ENCODE measurements at regions of chr6 and their contacts with region 1.

Region 1: GRCh38 chr6:111347589-111347988 is 135.4 kb downstream of the REV3L start:
- DNase-seq: no peak
- ATAC-seq: no peak
- H3K4me3 ChIP-seq: no peak overlapping the region
- H3K27ac ChIP-seq: no peak overlapping the region
- H3K4me1 ChIP-seq: no peaks in the 10 kb centered on the region
- H3K27me3 ChIP-seq: no peaks in the 10 kb centered on the region
- CTCF ChIP-seq: no peak
- POLR2A ChIP-seq: no peak

Region 2: DNA sequence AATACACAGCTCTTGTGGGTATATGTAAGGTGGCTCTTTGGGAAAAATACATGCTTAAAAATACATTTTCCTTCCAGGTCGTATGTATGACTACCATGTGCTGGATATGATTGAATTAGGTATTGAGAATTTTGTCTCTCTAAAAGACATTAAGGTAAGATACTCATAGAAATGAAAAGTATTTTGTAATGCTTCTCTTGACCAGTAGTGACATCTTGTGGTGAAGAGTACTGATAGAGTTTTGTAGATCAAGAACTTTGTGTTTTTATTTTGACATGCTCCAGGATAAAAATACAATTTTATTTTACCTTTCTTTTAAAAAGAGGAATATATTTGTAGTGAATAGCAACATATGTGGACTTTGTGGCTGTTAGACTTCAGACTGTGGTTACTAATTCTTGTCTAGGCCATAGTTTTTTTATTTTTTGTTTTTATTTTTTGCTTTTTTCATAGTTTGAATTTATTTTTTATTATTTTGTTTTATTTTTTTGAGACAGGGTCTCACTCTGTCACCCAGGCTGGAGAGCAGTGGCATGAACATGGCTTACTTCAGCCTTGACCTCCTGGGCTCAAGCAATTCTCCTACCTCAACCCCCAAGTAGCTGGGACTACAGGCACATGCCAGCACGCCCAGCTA is 347.8 kb before region 1 on chr6:
- intact Hi-C with region 1: loop called in 1 of 10 experiments (anchors 5 kb)
- DNase-seq: no peak
- ATAC-seq: no peak
- H3K4me3 ChIP-seq: no peak overlapping the region
- H3K27ac ChIP-seq: no peak overlapping the region
- H3K4me1 ChIP-seq: no peaks in the 10 kb centered on the region
- H3K27me3 ChIP-seq: no peaks in the 10 kb centered on the region
- CTCF ChIP-seq: peak in 11 of 12 donors; percentile 15 to 58 (median 45)
- POLR2A ChIP-seq: no peak